Panc1 (cell line): ENCODE measurements at regions of chr3 and their contacts with region 1.

Region 1: GRCh38 chr3:194070634-194071409 is 65.1 kb upstream of the HES1 start:
- DNase-seq: no peak
- ATAC-seq: peak; percentile 84
- H3K4me3 ChIP-seq: peak overlapping the region; percentile 48 to 60
- H3K27ac ChIP-seq: peak overlapping the region; percentile 79
- H3K4me1 ChIP-seq: peaks cover 37% of the 10 kb centered on the region
- H3K27me3 ChIP-seq: no peaks in the 10 kb centered on the region
- CTCF ChIP-seq: peak; percentile 8; the same call in 1 of the 2 replicates

Region 2: DNA sequence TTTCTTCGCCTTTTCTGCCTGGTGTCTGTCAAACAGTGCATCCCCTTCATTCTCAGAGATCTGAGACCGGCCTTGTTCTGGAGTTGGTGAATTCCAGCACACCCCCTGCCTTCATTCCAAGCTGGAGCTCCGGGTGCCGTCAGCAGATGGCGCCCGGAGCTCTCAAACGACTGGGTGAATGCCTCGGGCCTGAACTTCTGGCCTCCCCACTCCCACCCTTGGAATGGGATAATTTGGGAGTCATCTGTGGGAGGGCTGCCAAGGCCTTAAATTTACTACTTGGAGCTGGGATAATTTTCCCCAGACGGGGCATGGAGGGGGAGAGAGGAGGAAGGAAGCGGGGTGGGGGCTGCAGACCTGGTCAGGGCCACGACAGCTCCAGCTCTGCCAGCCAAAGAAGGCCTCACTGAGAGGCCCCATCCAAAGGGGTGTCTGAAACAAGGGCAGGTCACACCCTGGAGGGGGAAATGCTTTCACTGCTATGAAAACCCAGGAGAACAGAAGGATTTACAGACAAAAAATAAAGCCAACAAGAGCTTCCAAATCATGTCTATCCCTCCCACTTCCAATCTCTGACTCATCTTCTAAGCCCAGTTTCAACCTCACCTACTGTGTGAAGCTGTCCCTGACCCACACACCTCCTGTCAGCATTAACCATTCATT is 289.9 kb before region 1 on chr3:
- CTCF ChIA-PET with region 1: no interaction called
- POLR2A ChIA-PET with region 1: no interaction called
- in situ Hi-C with region 1: no loop called
- intact Hi-C with region 1: loop called (anchors 5 kb)
- DNase-seq: no peak
- ATAC-seq: peak; percentile 91
- H3K4me3 ChIP-seq: no peak overlapping the region
- H3K27ac ChIP-seq: 0 out of 2 replicates have a peak overlapping the region, but pooled peaks have one; percentile 12
- H3K4me1 ChIP-seq: peaks cover 24% of the 10 kb centered on the region
- H3K27me3 ChIP-seq: no peaks in the 10 kb centered on the region
- CTCF ChIP-seq: peak; percentile 96

Region 3: DNA sequence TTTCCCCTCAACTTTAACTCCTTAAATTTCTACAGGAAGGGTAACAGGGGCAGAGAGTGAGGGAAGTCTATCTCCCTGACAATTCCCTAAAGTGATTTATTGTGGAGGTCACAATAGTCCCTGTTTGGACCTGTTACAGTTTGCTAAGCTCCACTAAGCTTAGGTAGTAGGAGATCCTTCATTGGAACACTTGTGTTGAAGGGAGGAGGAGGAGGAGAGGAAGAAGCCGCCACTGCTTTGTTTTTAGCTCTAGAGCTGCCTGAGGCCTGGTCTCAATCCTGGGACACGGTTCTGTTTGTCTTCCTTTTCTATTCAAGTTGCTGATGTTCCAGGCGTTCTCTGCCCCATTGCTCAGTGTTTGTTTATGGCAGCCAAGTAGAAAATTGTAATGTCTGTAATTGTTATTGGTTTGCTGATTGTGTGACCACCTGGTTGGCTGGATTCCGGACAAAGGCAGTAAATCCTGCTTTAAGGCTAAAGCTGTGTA is 113.5 kb after region 1 on chr3:
- CTCF ChIA-PET with region 1: no interaction called
- POLR2A ChIA-PET with region 1: no interaction called
- in situ Hi-C with region 1: no loop called
- intact Hi-C with region 1: no loop called
- DNase-seq: no peak
- ATAC-seq: no peak
- H3K4me3 ChIP-seq: no peak overlapping the region
- H3K27ac ChIP-seq: peak overlapping the region; percentile 19; the same call in 1 of the 2 replicates
- H3K4me1 ChIP-seq: peaks cover 7% of the 10 kb centered on the region
- H3K27me3 ChIP-seq: no peaks in the 10 kb centered on the region
- CTCF ChIP-seq: no peak